Aorta (tissue), 5 donors: ENCODE measurements at regions of chr12 and their contacts with region 1.

Region 1: GRCh38 chr12:12327802-12328201 is 22.2 kb downstream of the MANSC1 start:
- DNase-seq: no peak
- ATAC-seq: peak; percentile 68
- H3K4me3 ChIP-seq: no peak overlapping the region
- H3K27ac ChIP-seq: no peak overlapping the region
- H3K4me1 ChIP-seq: no peaks in the 10 kb centered on the region
- H3K27me3 ChIP-seq: no peaks in the 10 kb centered on the region

Region 2: DNA sequence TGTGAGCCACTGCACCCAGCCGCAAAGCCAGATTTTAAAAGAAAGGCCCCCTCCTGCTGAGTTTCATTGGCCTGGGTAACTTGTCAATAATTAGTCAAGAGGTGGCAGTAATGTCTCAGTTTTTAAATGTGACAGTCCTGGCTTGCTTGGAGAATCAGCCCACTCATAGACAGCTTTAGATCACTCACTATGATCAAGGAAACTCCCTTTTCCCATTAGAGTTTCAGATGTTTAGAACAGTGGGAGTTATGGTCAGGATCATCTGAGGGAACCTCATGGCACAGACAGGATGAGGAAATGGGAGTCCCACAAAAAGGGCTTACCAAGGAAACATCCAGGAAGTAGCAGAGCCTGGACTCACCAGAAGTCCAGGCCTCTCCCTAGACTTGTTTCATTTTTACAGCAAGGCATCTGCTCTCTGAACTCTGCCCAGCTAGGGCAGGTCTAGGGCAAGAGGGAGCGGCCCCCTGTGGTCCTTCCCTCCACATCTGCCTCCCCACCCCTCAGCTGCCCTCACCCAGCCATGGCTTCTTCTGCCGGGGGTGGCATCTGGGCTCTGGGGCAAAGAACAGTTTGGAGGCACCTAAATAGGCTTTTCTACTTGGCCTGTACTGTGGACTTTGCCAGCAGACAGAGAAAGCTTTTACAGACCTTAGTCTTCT is 245.8 kb before region 1 on chr12:
- intact Hi-C with region 1: loop called (anchors 2 to 5 kb)
- DNase-seq: no peak
- ATAC-seq: peak; percentile 81
- H3K4me3 ChIP-seq: no peak overlapping the region
- H3K27ac ChIP-seq: peak overlapping the region in 1 of 2 donors; percentile 0
- H3K4me1 ChIP-seq: no peaks in the 10 kb centered on the region
- H3K27me3 ChIP-seq: no peaks in the 10 kb centered on the region

Region 3: DNA sequence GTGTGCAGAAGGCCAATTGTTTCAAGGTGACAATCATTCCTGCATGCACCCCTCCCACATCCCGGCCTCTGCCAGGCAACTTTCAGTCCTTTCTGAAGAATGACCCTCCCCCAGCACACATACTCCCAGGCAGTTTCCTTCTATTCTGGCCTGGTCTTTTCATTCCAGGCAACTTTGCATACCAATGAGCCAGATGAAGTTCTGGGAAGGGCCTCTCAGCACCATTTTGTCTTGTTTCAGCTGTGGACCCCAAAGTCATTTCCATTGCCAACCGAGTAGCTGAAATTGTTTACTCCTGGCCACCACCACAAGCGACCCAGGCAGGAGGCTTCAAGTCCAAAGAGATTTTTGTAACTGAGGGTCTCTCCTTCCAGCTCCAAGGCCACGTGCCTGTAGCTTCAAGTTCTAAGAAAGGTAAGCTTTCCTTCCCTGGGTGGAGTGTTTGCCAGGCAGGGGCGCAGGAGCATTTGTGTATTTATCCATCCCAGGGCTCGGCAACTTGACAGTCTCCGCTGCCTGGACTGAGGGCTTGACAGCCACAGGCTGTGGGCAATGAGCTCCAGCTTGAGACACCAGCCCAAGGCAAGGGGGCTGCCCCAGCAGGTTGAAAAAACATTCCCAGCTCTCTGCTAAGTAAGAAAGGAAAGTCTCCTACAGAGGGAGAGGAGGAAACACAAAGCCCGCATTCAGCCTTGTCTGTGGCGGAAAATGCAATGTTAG is 240.7 kb before region 1 on chr12:
- intact Hi-C with region 1: loop called (anchors 2 to 5 kb)
- DNase-seq: no peak
- ATAC-seq: no peak
- H3K4me3 ChIP-seq: no peak overlapping the region
- H3K27ac ChIP-seq: no peak overlapping the region
- H3K4me1 ChIP-seq: no peaks in the 10 kb centered on the region
- H3K27me3 ChIP-seq: no peaks in the 10 kb centered on the region

Region 4: GRCh38 chr12:12266873-12267741 is 60.7 kb before region 1 on chr12 and contains the start of gene LRP6:
- intact Hi-C with region 1: loop called (anchors 5 to 10 kb)
- DNase-seq: peak; percentile 94 to 96
- ATAC-seq: peak; percentile 98
- H3K4me3 ChIP-seq: peak within 1 kb of the TSS; percentile 82 to 89
- H3K27ac ChIP-seq: peak within 1 kb of the TSS; percentile 50 to 100
- H3K4me1 ChIP-seq: no peaks in the 10 kb centered on the region
- H3K27me3 ChIP-seq: no peaks in the 10 kb centered on the region
- total RNA-seq, gene LRP6: 36.5 to 57.0 TPM